ENCODE measurements at regions of chr15 and their contacts with region 1.

Region 1: GRCh38 chr15:98658831-98659699 is 10.7 kb downstream of the IGF1R start:
- DNase-seq: peak; percentile 11
- ATAC-seq: peak; percentile 96
- H3K4me3 ChIP-seq: no peak overlapping the region
- H3K27ac ChIP-seq: no peak overlapping the region
- H3K4me1 ChIP-seq: no peaks in the 10 kb centered on the region
- H3K27me3 ChIP-seq: no peaks in the 10 kb centered on the region
- CTCF ChIP-seq: peak; percentile 85 to 91 (median 87); a peak in 5 of 6 replicates
- EP300 ChIP-seq: no peak
- POLR2A ChIP-seq: no peak
- RAD21 ChIP-seq: peak; percentile 76

Region 2: GRCh38 chr15:98518823-98519561 is 140.1 kb before region 1 on chr15:
- CTCF ChIA-PET with region 1: interaction called, 93 read pairs
- POLR2A ChIA-PET with region 1: no interaction called
- RAD21 ChIA-PET with region 1: interaction called, 11 read pairs
- SMC1A ChIA-PET with region 1: interaction called, 27 read pairs
- in situ Hi-C with region 1: loop called (anchors 5 kb)
- intact Hi-C with region 1: loop called (anchors 1 kb)
- DNase-seq: no peak
- ATAC-seq: peak; percentile 95
- H3K4me3 ChIP-seq: no peak overlapping the region
- H3K27ac ChIP-seq: no peak overlapping the region
- H3K4me1 ChIP-seq: no peaks in the 10 kb centered on the region
- H3K27me3 ChIP-seq: no peaks in the 10 kb centered on the region
- CTCF ChIP-seq: peak; percentile 64 to 75 (median 68)
- EP300 ChIP-seq: no peak
- POLR2A ChIP-seq: no peak
- RAD21 ChIP-seq: peak; percentile 75

Region 3: GRCh38 chr15:98647774-98648653 is 11.1 kb before region 1 on chr15 and contains the start of gene IGF1R:
- CTCF ChIA-PET with region 1: interaction called, 13 read pairs
- POLR2A ChIA-PET with region 1: no interaction called
- RAD21 ChIA-PET with region 1: no interaction called
- SMC1A ChIA-PET with region 1: interaction called, 3 read pairs
- in situ Hi-C with region 1: no loop called
- intact Hi-C with region 1: no loop called
- DNase-seq: no peak
- ATAC-seq: peak; percentile 73
- H3K4me3 ChIP-seq: peak within 1 kb of the TSS; percentile 85
- H3K27ac ChIP-seq: no peak within 1 kb of the TSS
- H3K4me1 ChIP-seq: no peaks in the 10 kb centered on the region; the same call in 1 of the 2 replicates
- H3K27me3 ChIP-seq: peaks cover 14 to 29% of the 10 kb centered on the region in 2 experiments
- CTCF ChIP-seq: no peak
- EP300 ChIP-seq: no peak
- POLR2A ChIP-seq: peak; percentile 23; the same call in 1 of the 2 replicates
- RAD21 ChIP-seq: no peak
- polyA plus RNA-seq, gene IGF1R: 0.03 to 0.11 TPM

Measured in GM12878 (cell line).